Activated CD8-positive, alpha-beta memory T cell treated with anti-CD3 and anti-CD28 coated beads, Interleukin-2, amount 10 ng/mL, durations not matched to agents 7 days and 5 days (primary cell): ENCODE measurements at regions of chr7 and their contacts with region 1.

Region 1: DNA sequence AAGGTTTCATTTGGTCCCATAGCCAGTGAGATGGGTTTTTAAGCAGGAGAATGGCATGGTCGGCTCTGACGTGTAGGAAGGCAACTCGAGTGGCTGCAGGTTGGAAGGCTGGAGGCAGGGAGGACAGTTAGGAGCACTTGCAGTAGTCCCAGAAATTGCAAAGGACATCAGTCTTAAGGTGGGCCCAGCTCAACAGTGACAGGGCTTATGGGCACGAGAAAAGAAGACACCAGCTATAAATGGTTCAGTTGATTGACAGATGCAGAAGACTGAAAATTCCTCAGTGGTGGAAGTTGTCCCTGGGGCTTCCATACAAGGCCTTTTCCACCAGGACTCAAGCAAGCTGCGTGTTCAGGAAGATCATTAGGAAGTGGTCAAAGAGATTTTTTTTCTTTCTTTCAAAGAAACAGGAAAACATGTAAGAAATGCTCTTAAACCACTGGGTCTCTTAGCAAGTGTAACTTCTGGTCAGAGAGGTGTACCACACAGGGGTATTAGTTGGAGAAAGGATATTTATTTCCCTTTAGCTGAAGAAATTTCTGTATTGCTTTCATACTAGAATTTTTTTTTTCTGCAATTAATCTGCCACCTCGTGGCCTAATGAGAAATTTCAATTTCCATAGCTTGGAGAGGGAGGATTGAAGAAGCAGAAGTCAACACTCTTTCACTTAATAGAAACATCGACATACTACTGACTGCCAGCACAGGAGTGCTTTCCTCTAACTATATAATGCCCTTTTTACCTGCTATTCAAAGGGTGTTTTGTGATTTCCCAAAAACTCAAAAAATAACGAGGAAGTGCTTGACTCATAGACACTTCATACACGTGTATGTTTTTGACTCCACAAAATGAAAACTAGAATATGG is 177.4 kb upstream of the NAMPT start:
- DNase-seq: no peak
- ATAC-seq: no peak
- H3K4me3 Mint-ChIP-seq: no peak overlapping the region
- H3K27ac Mint-ChIP-seq: no peak overlapping the region
- H3K4me1 Mint-ChIP-seq: peaks cover 15% of the 10 kb centered on the region
- H3K27me3 Mint-ChIP-seq: no peaks in the 10 kb centered on the region

Region 2: DNA sequence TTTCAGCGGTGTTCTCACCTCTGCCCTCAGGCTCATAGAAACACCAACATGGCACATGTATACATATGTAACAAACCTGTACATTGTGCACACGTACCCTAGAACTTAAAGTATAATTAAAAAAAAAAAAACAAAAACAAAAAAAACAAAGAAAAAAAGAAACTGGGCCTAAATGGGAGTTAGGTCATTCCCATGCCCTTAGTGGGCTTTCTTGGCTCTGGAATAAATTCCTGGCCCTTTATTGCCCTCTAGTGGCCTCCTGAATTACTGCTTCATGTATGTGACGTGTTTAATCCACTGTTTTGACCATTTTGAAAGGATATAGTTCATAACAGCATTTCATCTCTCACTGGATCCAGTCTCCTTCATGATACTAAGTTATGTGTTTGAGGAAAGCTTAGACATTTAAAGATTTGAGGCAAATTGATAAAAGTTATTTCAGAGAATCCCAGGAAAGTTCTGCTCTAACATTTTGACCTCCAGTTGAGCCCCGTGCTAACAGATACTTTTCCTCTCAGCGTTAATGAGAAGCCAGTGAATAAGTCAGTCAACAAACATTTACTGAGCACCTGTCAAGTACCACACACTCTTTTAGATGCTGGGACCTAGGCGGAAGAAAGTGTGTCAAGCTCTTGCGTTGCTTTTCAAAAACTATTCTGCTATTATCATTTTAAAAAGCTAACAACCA is 295.4 kb before region 1 on chr7:
- CTCF ChIA-PET with region 1: interaction called, 151 read pairs
- DNase-seq: peak; percentile 57
- ATAC-seq: peak; percentile 39
- H3K4me3 Mint-ChIP-seq: no peak overlapping the region
- H3K27ac Mint-ChIP-seq: no peak overlapping the region
- H3K4me1 Mint-ChIP-seq: no peaks in the 10 kb centered on the region
- H3K27me3 Mint-ChIP-seq: peaks cover 21% of the 10 kb centered on the region

Region 3: GRCh38 chr7:106176414-106177299 is 285.6 kb before region 1 on chr7:
- CTCF ChIA-PET with region 1: interaction called, 151 read pairs
- DNase-seq: peak; percentile 77
- ATAC-seq: peak; percentile 81
- H3K4me3 Mint-ChIP-seq: no peak overlapping the region
- H3K27ac Mint-ChIP-seq: no peak overlapping the region
- H3K4me1 Mint-ChIP-seq: peaks cover 3% of the 10 kb centered on the region
- H3K27me3 Mint-ChIP-seq: peaks cover 24% of the 10 kb centered on the region

Region 4: GRCh38 chr7:106317971-106318370 is 144.3 kb before region 1 on chr7:
- CTCF ChIA-PET with region 1: no interaction called
- DNase-seq: no peak
- ATAC-seq: no peak
- H3K4me3 Mint-ChIP-seq: no peak overlapping the region
- H3K27ac Mint-ChIP-seq: no peak overlapping the region
- H3K4me1 Mint-ChIP-seq: peaks cover 10% of the 10 kb centered on the region
- H3K27me3 Mint-ChIP-seq: peaks cover 26% of the 10 kb centered on the region

Region 5: DNA sequence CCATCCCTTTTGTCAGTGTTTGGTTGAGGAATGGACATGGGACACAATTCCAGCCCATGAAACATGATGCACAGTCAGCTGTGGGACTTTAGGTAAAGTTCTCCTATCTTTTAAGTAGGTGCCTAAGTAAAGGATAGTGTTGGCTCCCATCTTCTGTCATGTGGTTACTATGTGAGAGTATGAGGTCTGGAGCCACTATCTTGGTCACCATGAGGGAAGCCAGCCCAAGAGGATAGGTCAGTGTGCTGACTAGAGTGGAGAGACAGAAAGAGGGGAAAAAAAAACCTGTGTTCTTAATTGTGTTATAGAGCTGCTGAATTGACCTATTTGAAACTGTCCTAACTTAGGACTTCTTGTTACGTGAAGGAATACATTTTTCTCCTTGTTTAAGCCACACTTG is 87.8 kb before region 1 on chr7:
- CTCF ChIA-PET with region 1: no interaction called
- DNase-seq: no peak
- ATAC-seq: no peak
- H3K4me3 Mint-ChIP-seq: no peak overlapping the region
- H3K27ac Mint-ChIP-seq: no peak overlapping the region
- H3K4me1 Mint-ChIP-seq: peaks cover 9% of the 10 kb centered on the region
- H3K27me3 Mint-ChIP-seq: no peaks in the 10 kb centered on the region